Panc1 (cell line): ENCODE measurements at regions of chr10 and their contacts with region 1.

Region 1: GRCh38 chr10:31864834-31865518 is 63.7 kb downstream of the ARHGAP12 start:
- DNase-seq: no peak
- ATAC-seq: peak; percentile 36
- H3K4me3 ChIP-seq: peak overlapping the region; percentile 19 to 47
- H3K27ac ChIP-seq: peak overlapping the region; percentile 92
- H3K4me1 ChIP-seq: peaks cover 39% of the 10 kb centered on the region
- H3K27me3 ChIP-seq: no peaks in the 10 kb centered on the region
- CTCF ChIP-seq: no peak

Region 2: GRCh38 chr10:31928549-31929260 is 63.7 kb after region 1 on chr10 and contains the start of gene ARHGAP12:
- CTCF ChIA-PET with region 1: interaction called, 4 read pairs
- POLR2A ChIA-PET with region 1: interaction called, 5 read pairs
- in situ Hi-C with region 1: no loop called
- intact Hi-C with region 1: loop called (anchors 5 kb)
- DNase-seq: no peak
- ATAC-seq: peak; percentile 89
- H3K4me3 ChIP-seq: peak within 1 kb of the TSS; percentile 73 to 88
- H3K27ac ChIP-seq: peak within 1 kb of the TSS; percentile 90
- H3K4me1 ChIP-seq: peaks cover 15% of the 10 kb centered on the region
- H3K27me3 ChIP-seq: no peaks in the 10 kb centered on the region
- CTCF ChIP-seq: no peak
- total RNA-seq, gene ARHGAP12: 22.9 TPM

Region 3: DNA sequence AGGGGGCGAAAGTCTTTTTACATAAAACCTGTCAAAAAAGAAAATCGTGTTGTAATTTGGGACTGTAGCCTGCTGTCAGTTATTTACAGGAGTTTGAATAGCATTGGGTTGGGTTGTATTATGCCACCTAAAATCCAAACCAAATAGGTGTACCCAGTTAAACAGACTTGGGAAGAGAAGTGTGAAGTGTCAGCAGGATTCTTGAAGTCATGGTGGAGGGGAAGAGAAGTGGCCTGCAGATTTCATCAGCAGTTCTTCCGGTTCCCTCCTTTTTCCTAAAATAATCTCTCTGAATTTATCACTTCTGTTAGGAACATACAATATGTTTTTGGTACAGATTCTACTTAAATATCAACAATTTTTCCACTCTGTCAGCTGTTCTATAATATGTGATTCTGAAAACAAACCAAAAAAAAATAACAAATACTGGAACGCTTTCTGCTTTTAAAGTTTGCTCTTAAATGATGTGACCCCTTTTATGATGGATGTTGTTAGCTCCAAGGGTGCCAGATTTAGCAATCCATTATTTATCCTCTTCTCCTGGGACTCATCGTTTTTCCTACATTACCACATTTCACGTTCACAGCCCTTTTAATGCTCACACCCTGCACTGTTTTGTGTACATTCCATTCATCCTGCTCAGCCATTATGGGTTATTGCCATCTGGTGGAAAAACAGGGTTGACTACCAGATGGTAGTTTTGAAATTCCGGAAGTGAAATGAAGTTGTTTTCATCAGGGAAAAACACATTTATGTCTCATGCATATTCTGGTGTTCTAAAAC is 82.4 kb after region 1 on chr10:
- CTCF ChIA-PET with region 1: interaction called, 13 read pairs
- POLR2A ChIA-PET with region 1: interaction called, 3 read pairs
- in situ Hi-C with region 1: no loop called
- intact Hi-C with region 1: loop called (anchors 5 kb)
- DNase-seq: no peak
- ATAC-seq: peak; percentile 86
- H3K4me3 ChIP-seq: peak overlapping the region in 1 of 2 experiments; percentile 29; a peak in 1 of 4 replicates
- H3K27ac ChIP-seq: peak overlapping the region; percentile 97
- H3K4me1 ChIP-seq: peaks cover 37% of the 10 kb centered on the region
- H3K27me3 ChIP-seq: no peaks in the 10 kb centered on the region
- CTCF ChIP-seq: peak; percentile 63

Region 4: GRCh38 chr10:32263300-32263699 is 398.3 kb after region 1 on chr10:
- CTCF ChIA-PET with region 1: no interaction called
- POLR2A ChIA-PET with region 1: no interaction called
- in situ Hi-C with region 1: no loop called
- intact Hi-C with region 1: no loop called
- DNase-seq: no peak
- ATAC-seq: no peak
- H3K4me3 ChIP-seq: no peak overlapping the region
- H3K27ac ChIP-seq: no peak overlapping the region
- H3K4me1 ChIP-seq: no peaks in the 10 kb centered on the region
- H3K27me3 ChIP-seq: no peaks in the 10 kb centered on the region
- CTCF ChIP-seq: no peak